ENCODE measurements at regions of chr7 and their contacts with region 1.

Region 1: DNA sequence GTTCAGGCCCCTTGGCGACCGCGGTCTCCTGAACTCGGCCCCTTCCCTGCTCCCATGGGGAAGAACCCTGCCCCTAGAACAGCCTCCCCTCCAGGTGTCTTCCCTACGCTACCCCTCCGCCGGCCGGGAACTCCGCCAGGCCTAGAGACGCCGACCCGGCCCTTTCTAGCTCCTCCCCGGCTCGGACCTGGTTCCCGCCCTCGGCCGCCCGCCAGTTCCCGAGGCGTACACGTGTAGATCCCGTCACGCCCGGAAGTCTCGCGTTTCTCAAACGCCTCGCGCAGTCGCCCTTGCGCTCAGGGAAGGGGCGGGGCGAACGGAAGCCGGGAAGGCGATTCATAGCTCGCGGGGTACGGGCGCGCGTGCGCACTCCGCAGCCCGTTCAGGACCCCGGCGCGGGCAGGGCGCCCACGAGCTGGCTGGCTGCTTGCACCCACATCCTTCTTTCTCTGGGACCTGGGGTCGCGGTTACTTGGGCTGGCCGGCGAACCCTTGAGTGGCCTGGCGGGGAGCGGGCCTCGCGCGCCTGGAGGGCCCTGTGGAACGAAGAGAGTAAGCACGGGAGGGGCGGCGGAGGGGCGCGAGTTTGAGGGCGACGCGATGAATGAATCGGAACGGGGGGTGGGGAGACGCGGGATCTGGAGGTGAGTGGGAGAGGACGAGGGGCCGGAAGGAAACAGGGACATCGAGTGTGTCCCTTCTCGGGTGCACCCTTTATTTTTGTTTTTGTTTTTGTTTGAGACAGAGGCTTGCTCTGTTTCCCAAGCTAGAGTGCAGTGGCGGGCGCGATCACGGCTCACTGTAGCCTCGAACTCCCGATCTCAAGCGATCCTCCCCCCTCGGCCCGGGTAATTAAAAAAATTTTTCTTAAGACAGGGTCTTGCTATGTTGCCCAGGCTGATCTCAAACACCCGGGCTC is at the start of gene POP7:
- DNase-seq: peak; percentile 95 to 99 (median 97)
- ATAC-seq: peak; percentile 97
- H3K4me3 ChIP-seq: peak within 1 kb of the TSS; percentile 85
- H3K4me3 Mint-ChIP-seq: peak within 1 kb of the TSS; percentile 88 to 97 (median 95)
- H3K27ac ChIP-seq: peak within 1 kb of the TSS; percentile 91
- H3K27ac Mint-ChIP-seq: peak within 1 kb of the TSS; percentile 88 to 96 (median 93)
- H3K4me1 ChIP-seq: peaks cover 9 to 12% of the 10 kb centered on the region in 2 donors
- H3K4me1 Mint-ChIP-seq: peaks cover 8 to 15% (median 13%) of the 10 kb centered on the region in 7 donors
- H3K27me3 ChIP-seq: no peaks in the 10 kb centered on the region
- H3K27me3 Mint-ChIP-seq: peaks cover 0 to 13% (median 3%) of the 10 kb centered on the region in 5 donors
- total RNA-seq, gene POP7: 8.9 to 38.2 (median 15.0) TPM

Region 2: GRCh38 chr7:100478966-100479665 is 226.9 kb before region 1 on chr7 and contains the start of gene TSC22D4:
- CTCF ChIA-PET with region 1: interaction called, 3 read pairs
- POLR2A ChIA-PET with region 1: interaction called, 3 read pairs
- intact Hi-C with region 1: loop called in 1 of 2 experiments (anchors 2 kb)
- DNase-seq: peak; percentile 82 to 96 (median 95)
- ATAC-seq: peak; percentile 83
- H3K4me3 ChIP-seq: peak within 1 kb of the TSS; percentile 97
- H3K4me3 Mint-ChIP-seq: peak within 1 kb of the TSS; percentile 92 to 100 (median 98)
- H3K27ac ChIP-seq: peak within 1 kb of the TSS; percentile 87
- H3K27ac Mint-ChIP-seq: peak within 1 kb of the TSS; percentile 80 to 98 (median 93)
- H3K4me1 ChIP-seq: peaks cover 42 to 51% of the 10 kb centered on the region in 2 donors
- H3K4me1 Mint-ChIP-seq: peaks cover 25 to 62% (median 38%) of the 10 kb centered on the region in 7 donors
- H3K27me3 ChIP-seq: no peaks in the 10 kb centered on the region
- H3K27me3 Mint-ChIP-seq: peaks cover 0 to 2% (median 0%) of the 10 kb centered on the region in 5 donors
- total RNA-seq, gene TSC22D4: 75.6 to 124 (median 115) TPM

Region 3: GRCh38 chr7:100626530-100627237 is 79.3 kb before region 1 on chr7:
- CTCF ChIA-PET with region 1: interaction called, 11 read pairs
- POLR2A ChIA-PET with region 1: interaction called, 8 read pairs
- intact Hi-C with region 1: no loop called
- DNase-seq: peak; percentile 56 to 88 (median 81)
- ATAC-seq: peak; percentile 99
- H3K4me3 ChIP-seq: peak overlapping the region; percentile 58
- H3K4me3 Mint-ChIP-seq: peak overlapping the region; percentile 60 to 87 (median 76)
- H3K27ac ChIP-seq: peak overlapping the region; percentile 84
- H3K27ac Mint-ChIP-seq: peak overlapping the region; percentile 49 to 88 (median 75)
- H3K4me1 ChIP-seq: peaks cover 14 to 18% of the 10 kb centered on the region in 2 donors
- H3K4me1 Mint-ChIP-seq: peaks cover 26 to 58% (median 43%) of the 10 kb centered on the region in 7 donors
- H3K27me3 ChIP-seq: peaks cover 0 to 4% of the 10 kb centered on the region in 2 donors
- H3K27me3 Mint-ChIP-seq: no peaks in the 10 kb centered on the region

Region 4: GRCh38 chr7:100691676-100692577 is 14.1 kb before region 1 on chr7:
- CTCF ChIA-PET with region 1: interaction called, 27 read pairs
- POLR2A ChIA-PET with region 1: interaction called, 19 read pairs
- intact Hi-C with region 1: loop called (anchors 1 kb)
- DNase-seq: peak; percentile 64 to 85 (median 78)
- ATAC-seq: peak; percentile 79
- H3K4me3 ChIP-seq: peak overlapping the region; percentile 67
- H3K4me3 Mint-ChIP-seq: peak overlapping the region; percentile 92 to 100 (median 94)
- H3K27ac ChIP-seq: peak overlapping the region; percentile 73
- H3K27ac Mint-ChIP-seq: peak overlapping the region; percentile 62 to 96 (median 95)
- H3K4me1 ChIP-seq: peaks cover 23 to 27% of the 10 kb centered on the region in 2 donors
- H3K4me1 Mint-ChIP-seq: peaks cover 29 to 54% (median 41%) of the 10 kb centered on the region in 7 donors
- H3K27me3 ChIP-seq: no peaks in the 10 kb centered on the region
- H3K27me3 Mint-ChIP-seq: peaks cover 0 to 16% (median 0%) of the 10 kb centered on the region in 5 donors

Region 5: GRCh38 chr7:100819551-100819950 is 113.5 kb after region 1 on chr7:
- CTCF ChIA-PET with region 1: no interaction called
- POLR2A ChIA-PET with region 1: no interaction called
- intact Hi-C with region 1: no loop called
- DNase-seq: no peak
- ATAC-seq: no peak
- H3K4me3 ChIP-seq: no peak overlapping the region
- H3K4me3 Mint-ChIP-seq: no peak overlapping the region
- H3K27ac ChIP-seq: no peak overlapping the region
- H3K27ac Mint-ChIP-seq: no peak overlapping the region
- H3K4me1 ChIP-seq: no peaks in the 10 kb centered on the region
- H3K4me1 Mint-ChIP-seq: peaks cover 0 to 2% (median 0%) of the 10 kb centered on the region in 7 donors
- H3K27me3 ChIP-seq: no peaks in the 10 kb centered on the region
- H3K27me3 Mint-ChIP-seq: peaks cover 0 to 8% (median 0%) of the 10 kb centered on the region in 5 donors

Region 6: GRCh38 chr7:100852048-100852872 is 146.2 kb after region 1 on chr7 and contains the start of gene SLC12A9:
- CTCF ChIA-PET with region 1: interaction called, 37 read pairs
- POLR2A ChIA-PET with region 1: interaction called, 21 read pairs
- intact Hi-C with region 1: loop called (anchors 1 kb)
- DNase-seq: peak; percentile 71 to 90 (median 85)
- ATAC-seq: peak; percentile 96
- H3K4me3 ChIP-seq: peak within 1 kb of the TSS; percentile 73
- H3K4me3 Mint-ChIP-seq: peak within 1 kb of the TSS; percentile 89 to 95 (median 92)
- H3K27ac ChIP-seq: peak within 1 kb of the TSS; percentile 76
- H3K27ac Mint-ChIP-seq: peak within 1 kb of the TSS; percentile 71 to 97 (median 90)
- H3K4me1 ChIP-seq: peaks cover 8 to 16% of the 10 kb centered on the region in 2 donors
- H3K4me1 Mint-ChIP-seq: peaks cover 0 to 31% (median 19%) of the 10 kb centered on the region in 7 donors
- H3K27me3 ChIP-seq: no peaks in the 10 kb centered on the region
- H3K27me3 Mint-ChIP-seq: no peaks in the 10 kb centered on the region
- total RNA-seq, gene SLC12A9: 50.4 to 78.6 (median 62.7) TPM

Region 7: GRCh38 chr7:101085162-101085987 is 379.4 kb after region 1 on chr7 and contains the start of gene TRIM56:
- CTCF ChIA-PET with region 1: no interaction called
- POLR2A ChIA-PET with region 1: interaction called, 3 read pairs
- intact Hi-C with region 1: loop called in 1 of 2 experiments (anchors 2 kb)
- DNase-seq: peak; percentile 53 to 77 (median 74)
- ATAC-seq: peak; percentile 94
- H3K4me3 ChIP-seq: peak within 1 kb of the TSS; percentile 100
- H3K4me3 Mint-ChIP-seq: peak within 1 kb of the TSS; percentile 91 to 100 (median 98)
- H3K27ac ChIP-seq: peak within 1 kb of the TSS; percentile 97
- H3K27ac Mint-ChIP-seq: peak within 1 kb of the TSS; percentile 93 to 100 (median 99)
- H3K4me1 ChIP-seq: peaks cover 10 to 15% of the 10 kb centered on the region in 2 donors
- H3K4me1 Mint-ChIP-seq: peaks cover 14 to 43% (median 28%) of the 10 kb centered on the region in 7 donors
- H3K27me3 ChIP-seq: no peaks in the 10 kb centered on the region
- H3K27me3 Mint-ChIP-seq: peaks cover 0 to 6% (median 0%) of the 10 kb centered on the region in 5 donors
- total RNA-seq, gene TRIM56: 49.6 to 72.3 (median 68.0) TPM

Measured in naive thymus-derived CD4-positive, alpha-beta T cell (primary cell).